T-cell (primary cell): ENCODE measurements at regions of chr1 and their contacts with region 1.

Region 1: DNA sequence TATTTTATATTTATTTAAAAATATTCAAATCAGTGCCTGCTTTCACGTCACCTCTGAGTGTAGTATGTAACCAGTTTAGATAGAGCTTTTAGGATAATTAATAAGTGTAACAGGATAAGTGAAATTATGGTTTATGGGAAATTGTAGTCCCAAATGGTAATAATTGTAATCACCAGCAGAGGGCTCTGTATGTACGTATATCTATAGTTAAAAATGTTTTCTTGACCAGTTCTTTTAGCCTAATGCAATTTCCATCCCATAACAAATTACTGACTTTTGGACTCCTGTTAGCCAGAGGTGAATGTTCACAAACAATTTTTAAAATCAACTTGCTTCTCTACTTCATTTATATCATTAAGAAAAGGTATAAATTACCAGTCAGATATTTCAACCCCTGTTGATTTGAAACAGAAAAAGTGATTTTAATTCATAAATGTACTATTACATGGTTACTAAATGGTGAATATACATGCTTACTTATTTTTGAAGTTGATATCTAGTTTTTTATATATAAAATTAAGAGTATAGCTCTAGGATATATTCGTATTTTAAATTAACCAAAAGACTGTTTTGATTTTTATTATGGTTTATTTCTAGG is 25.3 kb downstream of the SLC30A7 start:
- DNase-seq: peak in 2 of 35 experiments; percentile 17 to 81
- ATAC-seq: no peak
- H3K4me3 ChIP-seq: no peak overlapping the region
- H3K4me3 Mint-ChIP-seq: no peak overlapping the region
- H3K27ac ChIP-seq: no peak overlapping the region
- H3K27ac Mint-ChIP-seq: peak overlapping the region; percentile 81 to 86
- H3K4me1 ChIP-seq: peaks cover 19 to 37% of the 10 kb centered on the region in 2 experiments
- H3K4me1 Mint-ChIP-seq: peaks cover 29 to 38% (median 37%) of the 10 kb centered on the region in 3 donors
- H3K27me3 ChIP-seq: no peaks in the 10 kb centered on the region
- H3K27me3 Mint-ChIP-seq: no peaks in the 10 kb centered on the region

Region 2: GRCh38 chr1:100909018-100909417 is 12.2 kb before region 1 on chr1:
- CTCF ChIA-PET with region 1: interaction called, 3 to 14 read pairs
- POLR2A ChIA-PET with region 1: no interaction called
- DNase-seq: no peak
- ATAC-seq: no peak
- H3K4me3 ChIP-seq: no peak overlapping the region
- H3K4me3 Mint-ChIP-seq: no peak overlapping the region
- H3K27ac ChIP-seq: no peak overlapping the region
- H3K27ac Mint-ChIP-seq: no peak overlapping the region
- H3K4me1 ChIP-seq: peaks cover 0 to 11% of the 10 kb centered on the region in 2 experiments
- H3K4me1 Mint-ChIP-seq: peaks cover 42 to 48% (median 47%) of the 10 kb centered on the region in 3 donors
- H3K27me3 ChIP-seq: no peaks in the 10 kb centered on the region
- H3K27me3 Mint-ChIP-seq: no peaks in the 10 kb centered on the region

Region 3: GRCh38 chr1:101247404-101248287 is 326.4 kb after region 1 on chr1:
- CTCF ChIA-PET with region 1: interaction called, 4 to 11 read pairs
- POLR2A ChIA-PET with region 1: interaction called, 4 to 8 read pairs
- DNase-seq: peak in 1 of 35 experiments; percentile 7
- ATAC-seq: peak in 3 of 4 experiments; percentile 26 to 39 (median 39)
- H3K4me3 ChIP-seq: no peak overlapping the region
- H3K4me3 Mint-ChIP-seq: peak overlapping the region in 1 of 3 donors; percentile 42
- H3K27ac ChIP-seq: peak overlapping the region; percentile 32
- H3K27ac Mint-ChIP-seq: peak overlapping the region; percentile 83 to 86
- H3K4me1 ChIP-seq: peaks cover 22 to 34% of the 10 kb centered on the region in 2 experiments
- H3K4me1 Mint-ChIP-seq: peaks cover 77 to 79% (median 79%) of the 10 kb centered on the region in 3 donors
- H3K27me3 ChIP-seq: no peaks in the 10 kb centered on the region
- H3K27me3 Mint-ChIP-seq: no peaks in the 10 kb centered on the region

Region 4: GRCh38 chr1:101357444-101357986 is 436.3 kb after region 1 on chr1:
- CTCF ChIA-PET with region 1: interaction called in 1 of 2 experiments, 15 read pairs
- POLR2A ChIA-PET with region 1: no interaction called
- DNase-seq: peak; percentile 17 to 93 (median 61)
- ATAC-seq: peak; percentile 98 to 100 (median 99)
- H3K4me3 ChIP-seq: no peak overlapping the region
- H3K4me3 Mint-ChIP-seq: peak overlapping the region in 2 of 3 donors; percentile 42 to 53
- H3K27ac ChIP-seq: no peak overlapping the region
- H3K27ac Mint-ChIP-seq: peak overlapping the region; percentile 5 to 85
- H3K4me1 ChIP-seq: peaks cover 4 to 6% of the 10 kb centered on the region in 2 experiments
- H3K4me1 Mint-ChIP-seq: peaks cover 8 to 13% (median 10%) of the 10 kb centered on the region in 3 donors
- H3K27me3 ChIP-seq: no peaks in the 10 kb centered on the region
- H3K27me3 Mint-ChIP-seq: no peaks in the 10 kb centered on the region

Region 5: DNA sequence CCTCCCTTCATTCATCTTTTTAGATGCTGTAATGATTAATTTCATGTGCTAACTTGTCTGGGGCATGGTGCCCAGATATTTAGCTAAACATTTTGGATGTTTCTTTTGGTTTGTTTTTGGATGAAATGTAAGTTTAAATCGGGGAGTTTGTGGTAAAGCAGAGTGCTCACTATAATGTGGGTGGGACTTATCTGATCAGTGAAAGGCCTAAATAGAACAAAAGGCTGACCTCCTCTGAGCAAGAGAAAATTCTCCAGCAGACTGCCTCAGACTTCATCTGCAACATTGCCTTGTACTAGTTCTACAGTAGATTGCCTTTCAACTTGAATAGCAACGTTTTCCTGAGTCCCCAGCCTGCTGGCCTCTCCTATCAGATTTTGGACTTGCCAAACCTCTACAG is 499.2 kb after region 1 on chr1:
- CTCF ChIA-PET with region 1: no interaction called
- POLR2A ChIA-PET with region 1: interaction called in 1 of 2 experiments, 14 read pairs
- DNase-seq: no peak
- ATAC-seq: no peak
- H3K4me3 ChIP-seq: no peak overlapping the region
- H3K4me3 Mint-ChIP-seq: no peak overlapping the region
- H3K27ac ChIP-seq: no peak overlapping the region
- H3K27ac Mint-ChIP-seq: no peak overlapping the region
- H3K4me1 ChIP-seq: no peaks in the 10 kb centered on the region
- H3K4me1 Mint-ChIP-seq: no peaks in the 10 kb centered on the region
- H3K27me3 ChIP-seq: no peaks in the 10 kb centered on the region
- H3K27me3 Mint-ChIP-seq: no peaks in the 10 kb centered on the region